Gastrocnemius medialis (tissue), 4 donors: ENCODE measurements at regions of chr20 and their contacts with region 1.

Region 1: DNA sequence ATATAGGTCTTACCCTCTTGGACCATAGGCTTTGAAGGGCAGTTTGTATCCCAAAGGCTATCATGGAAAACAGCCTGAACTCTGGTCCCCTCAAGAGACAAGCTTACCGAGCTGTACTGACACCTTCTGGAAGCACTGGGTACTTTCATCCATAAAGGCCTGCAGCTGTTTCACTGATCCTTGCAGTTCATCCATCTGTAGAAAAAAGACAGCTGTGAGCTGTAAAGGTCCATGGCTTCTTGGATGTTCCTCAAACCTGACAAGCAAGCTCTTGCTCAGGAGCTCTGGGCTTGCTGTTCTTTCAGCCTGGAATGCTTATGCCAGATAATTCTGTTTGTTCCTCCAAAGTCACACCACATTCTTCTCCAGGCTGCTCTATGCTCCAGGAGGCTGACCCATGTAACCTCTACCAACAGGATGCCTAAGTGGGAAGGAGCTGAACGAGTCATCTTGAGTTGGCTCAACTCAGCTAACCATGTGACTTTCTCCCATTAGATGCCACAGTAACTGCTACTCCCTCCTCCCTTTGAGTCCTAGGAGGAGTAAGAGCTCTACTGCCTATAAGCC is 8.8 kb upstream of the NDRG3 start:
- DNase-seq: peak; percentile 35 to 55
- ATAC-seq: peak; percentile 97
- H3K4me3 ChIP-seq: no peak overlapping the region
- H3K27ac ChIP-seq: peak overlapping the region in 2 of 4 donors; percentile 10 to 16
- H3K4me1 ChIP-seq: peaks cover 0 to 7% of the 10 kb centered on the region in 2 donors
- H3K27me3 ChIP-seq: no peaks in the 10 kb centered on the region
- CTCF ChIP-seq: peak; percentile 78 to 89 (median 88)
- POLR2A ChIP-seq: no peak

Region 2: GRCh38 chr20:36717657-36718056 is 37.1 kb before region 1 on chr20:
- in situ Hi-C with region 1: no loop called
- intact Hi-C with region 1: loop called (anchors 1 kb)
- DNase-seq: peak in 1 of 2 donors; percentile 25
- ATAC-seq: peak; percentile 65 to 84
- H3K4me3 ChIP-seq: no peak overlapping the region
- H3K27ac ChIP-seq: no peak overlapping the region
- H3K4me1 ChIP-seq: peaks cover 9% of the 10 kb centered on the region in 2 donors
- H3K27me3 ChIP-seq: no peaks in the 10 kb centered on the region
- CTCF ChIP-seq: peak; percentile 33 to 63 (median 53)
- POLR2A ChIP-seq: no peak

Region 3: DNA sequence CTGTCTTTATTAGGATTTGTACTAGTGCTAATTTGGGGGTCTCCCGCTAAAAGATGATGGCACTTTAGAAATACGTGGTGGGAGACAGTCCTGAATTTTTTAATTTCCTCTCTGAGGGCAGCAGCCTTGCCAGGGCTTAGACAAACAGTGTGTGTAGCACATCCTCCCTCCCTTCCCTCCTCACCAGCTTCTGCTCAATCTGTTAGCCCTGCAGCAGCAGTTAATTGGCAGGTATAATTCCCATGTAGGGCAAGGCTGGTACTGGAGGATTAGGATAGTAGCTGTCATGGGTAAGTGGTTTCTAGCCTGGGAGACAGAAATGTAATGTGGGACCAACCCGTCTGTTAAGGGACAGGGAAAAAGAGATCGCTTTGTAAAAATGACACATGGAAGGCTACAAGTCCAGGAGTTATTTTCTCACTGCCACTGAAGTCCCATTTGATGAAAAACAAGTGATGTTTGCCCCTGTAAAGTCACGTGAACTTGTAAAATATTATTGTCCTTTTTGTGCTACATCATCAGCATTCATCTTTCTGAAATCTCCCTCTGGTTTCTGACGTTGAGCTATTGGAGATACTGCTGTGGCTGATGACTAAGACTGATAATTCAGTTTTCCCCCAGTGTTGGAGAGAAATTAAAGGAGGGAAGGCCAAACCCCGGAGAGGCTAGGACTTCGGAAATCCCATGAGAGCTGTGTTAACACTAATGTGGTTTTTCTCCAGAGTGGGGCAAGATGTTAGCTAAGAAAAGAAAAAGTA is 979.7 kb after region 1 on chr20:
- in situ Hi-C with region 1: no loop called
- intact Hi-C with region 1: no loop called
- DNase-seq: no peak
- ATAC-seq: no peak
- H3K4me3 ChIP-seq: no peak overlapping the region
- H3K27ac ChIP-seq: no peak overlapping the region
- H3K4me1 ChIP-seq: peaks cover 39 to 42% of the 10 kb centered on the region in 2 donors
- H3K27me3 ChIP-seq: no peaks in the 10 kb centered on the region
- CTCF ChIP-seq: no peak
- POLR2A ChIP-seq: no peak